Activated B cell treated with CpG ODN at 0.5 μM for 24 hours (primary cell): ENCODE measurements at regions of chr5 and their contacts with region 1.

Region 1: GRCh38 chr5:56814963-56815658 is at the start of gene MAP3K1:
- DNase-seq: peak; percentile 86
- ATAC-seq: peak; percentile 63
- H3K4me3 Mint-ChIP-seq: peak within 1 kb of the TSS; percentile 93
- H3K27ac Mint-ChIP-seq: peak within 1 kb of the TSS; percentile 93
- H3K4me1 Mint-ChIP-seq: peaks cover 50% of the 10 kb centered on the region
- H3K27me3 Mint-ChIP-seq: no peaks in the 10 kb centered on the region
- CTCF ChIP-seq: no peak
- total RNA-seq, gene MAP3K1: 92.8 and 102 TPM in 2 replicates

Region 2: DNA sequence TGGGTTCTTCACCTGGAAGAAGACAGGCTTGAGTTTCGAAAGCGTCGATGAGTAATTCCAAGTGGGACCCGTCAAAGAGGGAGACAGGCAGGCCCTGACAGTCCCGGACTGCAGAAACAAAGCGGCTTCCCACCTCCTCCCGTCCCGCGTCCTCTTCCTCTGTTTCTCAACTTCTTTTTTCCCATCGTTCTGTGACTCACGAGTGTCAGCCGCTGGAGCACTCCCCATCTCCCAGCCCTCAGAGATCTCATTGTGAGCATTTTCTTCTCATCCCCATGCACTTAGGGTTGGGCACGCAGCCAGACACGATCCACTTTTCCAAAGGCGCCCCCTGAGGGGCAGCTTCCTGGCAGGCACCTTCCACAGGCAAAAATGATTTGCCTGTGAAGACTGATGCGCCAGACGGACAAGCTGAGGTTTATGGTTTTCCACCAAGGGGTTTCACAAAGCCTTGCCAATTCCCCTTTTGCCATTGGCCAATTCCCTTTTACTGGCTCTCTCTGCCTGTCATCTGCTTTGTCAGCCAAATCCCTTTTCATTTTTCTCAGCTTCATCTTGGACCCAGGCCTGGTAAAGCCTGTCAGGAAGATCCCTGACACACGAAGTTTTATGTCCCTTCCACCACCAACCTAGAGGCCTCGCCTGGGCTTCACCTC is 495.5 kb before region 1 on chr5:
- CTCF ChIA-PET with region 1: no interaction called
- POLR2A ChIA-PET with region 1: no interaction called
- intact Hi-C with region 1: loop called (anchors 1 kb)
- DNase-seq: no peak
- ATAC-seq: no peak
- H3K4me3 Mint-ChIP-seq: no peak overlapping the region
- H3K27ac Mint-ChIP-seq: no peak overlapping the region
- H3K4me1 Mint-ChIP-seq: peaks cover 41% of the 10 kb centered on the region
- H3K27me3 Mint-ChIP-seq: no peaks in the 10 kb centered on the region
- CTCF ChIP-seq: no peak

Region 3: DNA sequence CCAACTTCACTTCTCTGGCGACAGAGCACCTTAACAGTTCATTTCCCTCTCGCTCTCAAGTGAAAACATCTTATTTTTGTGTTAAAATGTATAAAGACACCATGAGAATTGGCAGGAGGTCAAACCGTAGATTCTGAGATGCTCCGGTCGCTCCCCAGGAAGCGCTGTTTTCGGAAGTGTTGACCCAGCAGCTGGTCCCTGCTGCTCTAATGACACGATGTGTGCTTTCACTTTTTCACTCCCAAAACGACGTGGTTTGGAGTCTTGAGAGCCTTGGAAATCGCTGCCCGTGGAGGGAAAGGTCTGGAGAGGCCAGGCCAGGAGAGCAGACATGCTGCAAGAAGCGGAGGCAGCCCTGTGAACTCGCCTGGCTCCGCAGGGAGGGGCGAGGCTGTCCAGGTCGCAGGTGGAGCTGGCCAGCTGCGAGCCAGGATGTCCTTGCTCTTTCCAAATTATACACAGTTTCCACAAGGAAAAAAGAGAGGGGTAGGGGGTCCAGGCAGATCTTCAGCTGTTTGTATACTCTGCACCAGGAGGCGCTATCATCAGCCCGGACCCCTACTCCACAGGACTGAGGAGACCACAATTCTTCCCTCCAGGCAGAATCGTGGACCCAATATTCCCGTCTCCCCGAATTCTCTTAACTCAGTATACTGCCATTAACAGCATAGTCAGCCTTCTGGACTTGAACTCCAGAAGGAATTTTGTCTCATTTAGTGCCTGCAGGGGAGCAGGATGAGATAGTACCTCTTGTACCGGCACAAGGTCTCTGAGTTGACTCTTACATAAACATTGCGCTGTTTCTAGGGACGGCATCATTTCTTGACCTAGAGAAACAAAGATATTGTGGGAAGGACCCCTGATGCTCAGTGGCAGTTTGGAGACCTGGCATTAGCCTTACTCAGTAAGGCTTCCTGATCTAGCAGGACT is 333.4 kb before region 1 on chr5:
- CTCF ChIA-PET with region 1: no interaction called
- POLR2A ChIA-PET with region 1: interaction called, 9 read pairs
- intact Hi-C with region 1: loop called (anchors 1 kb)
- DNase-seq: peak; percentile 41
- ATAC-seq: peak; percentile 14
- H3K4me3 Mint-ChIP-seq: peak overlapping the region; percentile 88
- H3K27ac Mint-ChIP-seq: peak overlapping the region; percentile 92
- H3K4me1 Mint-ChIP-seq: peaks cover 45% of the 10 kb centered on the region
- H3K27me3 Mint-ChIP-seq: no peaks in the 10 kb centered on the region
- CTCF ChIP-seq: no peak

Region 4: GRCh38 chr5:56686337-56687195 is 128.5 kb before region 1 on chr5:
- CTCF ChIA-PET with region 1: no interaction called
- POLR2A ChIA-PET with region 1: interaction called, 38 read pairs
- intact Hi-C with region 1: loop called (anchors 2 kb)
- DNase-seq: peak; percentile 31
- ATAC-seq: peak; percentile 72
- H3K4me3 Mint-ChIP-seq: peak overlapping the region; percentile 62
- H3K27ac Mint-ChIP-seq: peak overlapping the region; percentile 88
- H3K4me1 Mint-ChIP-seq: peaks cover 98% of the 10 kb centered on the region
- H3K27me3 Mint-ChIP-seq: no peaks in the 10 kb centered on the region
- CTCF ChIP-seq: no peak

Region 5: GRCh38 chr5:56827049-56827448 is 11.9 kb after region 1 on chr5:
- CTCF ChIA-PET with region 1: interaction called, 5 read pairs
- POLR2A ChIA-PET with region 1: interaction called, 19 read pairs
- intact Hi-C with region 1: loop called (anchors 1 kb)
- DNase-seq: no peak
- ATAC-seq: peak; percentile 11
- H3K4me3 Mint-ChIP-seq: peak overlapping the region; percentile 24
- H3K27ac Mint-ChIP-seq: peak overlapping the region; percentile 73
- H3K4me1 Mint-ChIP-seq: peaks cover 96% of the 10 kb centered on the region
- H3K27me3 Mint-ChIP-seq: no peaks in the 10 kb centered on the region
- CTCF ChIP-seq: no peak